Aorta (tissue), 5 donors: ENCODE measurements at regions of chrX and their contacts with region 1.

Region 1: GRCh38 chrX:155056877-155057792 is 13.8 kb downstream of the CMC4 start:
- DNase-seq: peak; percentile 68 to 80
- ATAC-seq: peak; percentile 90
- H3K4me3 ChIP-seq: no peak overlapping the region
- H3K27ac ChIP-seq: peak overlapping the region in 1 of 2 donors; percentile 1
- H3K4me1 ChIP-seq: no peaks in the 10 kb centered on the region
- H3K27me3 ChIP-seq: no peaks in the 10 kb centered on the region

Region 2: DNA sequence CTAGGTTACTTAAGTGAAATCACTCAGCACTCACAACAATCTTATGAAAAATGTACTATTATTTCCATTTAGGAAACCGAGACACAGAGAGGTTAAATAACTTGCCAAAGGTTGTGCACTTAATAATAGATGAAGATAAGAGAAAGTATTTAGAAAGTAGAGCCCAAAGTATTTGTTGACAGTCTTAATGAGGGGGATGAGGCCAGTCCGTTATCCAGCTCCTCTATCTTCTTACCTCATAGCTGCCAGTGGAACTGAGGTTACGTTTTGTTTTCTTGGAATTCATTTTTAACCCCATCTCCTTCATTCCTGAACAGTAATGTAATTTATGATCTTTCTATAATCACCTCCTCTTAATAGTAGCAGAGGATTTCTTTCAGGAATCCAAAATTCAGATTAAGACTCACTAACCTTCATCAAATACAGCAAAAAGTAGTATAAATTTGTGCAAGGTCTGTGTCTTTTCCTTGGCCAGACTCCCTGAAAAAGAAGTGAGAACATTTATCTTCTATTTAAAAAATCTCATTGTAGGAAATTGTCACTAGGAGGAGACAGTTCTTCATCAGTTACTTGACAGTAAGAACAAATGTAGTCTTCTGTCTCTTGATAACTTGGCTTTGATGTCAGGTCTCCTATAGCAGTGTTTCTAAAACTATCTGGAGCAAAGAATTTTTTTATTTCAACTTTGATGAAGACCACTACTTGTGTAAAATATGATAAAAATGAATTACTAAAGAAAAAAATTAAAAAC is 70.1 kb before region 1 on chrX:
- intact Hi-C with region 1: loop called in 1 of 2 experiments (anchors 5 kb)
- DNase-seq: no peak
- ATAC-seq: no peak
- H3K4me3 ChIP-seq: no peak overlapping the region
- H3K27ac ChIP-seq: no peak overlapping the region
- H3K4me1 ChIP-seq: no peaks in the 10 kb centered on the region
- H3K27me3 ChIP-seq: no peaks in the 10 kb centered on the region

Region 3: DNA sequence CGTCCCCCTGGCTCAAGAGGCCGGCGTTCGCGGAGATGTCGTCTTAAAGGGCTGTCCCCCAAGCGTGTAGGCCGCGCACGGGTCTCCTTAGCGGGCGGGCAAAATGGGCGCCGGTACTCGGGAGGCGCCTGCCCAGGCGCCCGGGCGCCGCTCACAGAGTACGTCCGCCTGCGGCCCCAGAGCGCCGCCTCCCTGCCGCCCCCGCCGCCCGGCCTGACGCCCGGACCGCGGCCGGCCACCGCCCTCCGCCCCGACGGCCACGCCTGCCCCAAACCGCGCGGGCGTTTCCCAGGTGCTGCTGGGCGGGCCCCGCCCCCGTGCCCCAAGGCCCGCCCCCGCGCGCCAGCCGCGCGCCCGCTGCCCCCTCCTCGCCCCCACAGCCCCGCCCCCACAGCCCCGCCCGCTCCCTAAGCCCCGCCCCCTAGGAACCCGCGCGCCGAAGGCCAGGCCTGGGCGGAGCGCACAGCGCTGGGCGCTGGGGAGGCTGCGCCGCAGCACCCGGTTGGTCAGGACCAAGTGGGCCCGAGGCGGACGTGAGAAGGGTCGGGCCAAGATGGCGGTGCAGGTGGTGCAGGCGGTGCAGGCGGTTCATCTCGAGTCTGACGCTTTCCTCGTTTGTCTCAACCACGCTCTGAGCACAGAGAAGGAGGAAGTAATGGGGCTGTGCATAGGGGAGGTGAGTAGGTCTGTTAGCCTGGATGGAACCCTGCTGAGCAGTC is 14.0 kb after region 1 on chrX and contains the starts of genes BRCC3, CMC4 and MTCP1:
- intact Hi-C with region 1: no loop called
- DNase-seq: peak; percentile 87 to 92
- ATAC-seq: peak; percentile 93
- H3K4me3 ChIP-seq: peak within 1 kb of the TSS; percentile 42 to 79
- H3K27ac ChIP-seq: peak within 1 kb of the TSS; percentile 20 to 90
- H3K4me1 ChIP-seq: no peaks in the 10 kb centered on the region
- H3K27me3 ChIP-seq: no peaks in the 10 kb centered on the region
- total RNA-seq, gene BRCC3: 14.8 to 14.9 TPM
- total RNA-seq, gene CMC4: 4.8 to 6.6 TPM
- total RNA-seq, gene MTCP1: 19.6 to 20.8 TPM